ENCODE measurements at regions of chr5 and their contacts with region 1.

Region 1: GRCh38 chr5:177607452-177608192 is 7.7 kb downstream of the B4GALT7 start:
- DNase-seq: peak; percentile 78 to 90
- ATAC-seq: peak; percentile 86 to 95
- H3K4me3 ChIP-seq: no peak overlapping the region
- H3K27ac ChIP-seq: no peak overlapping the region
- H3K4me1 ChIP-seq: peaks cover 12% of the 10 kb centered on the region; the same call in 1 of the 3 replicates
- CTCF ChIP-seq: peak; percentile 75
- EP300 ChIP-seq: no peak
- POLR2A ChIP-seq: no peak
- RAD21 ChIP-seq: peak; percentile 71 to 75

Region 2: DNA sequence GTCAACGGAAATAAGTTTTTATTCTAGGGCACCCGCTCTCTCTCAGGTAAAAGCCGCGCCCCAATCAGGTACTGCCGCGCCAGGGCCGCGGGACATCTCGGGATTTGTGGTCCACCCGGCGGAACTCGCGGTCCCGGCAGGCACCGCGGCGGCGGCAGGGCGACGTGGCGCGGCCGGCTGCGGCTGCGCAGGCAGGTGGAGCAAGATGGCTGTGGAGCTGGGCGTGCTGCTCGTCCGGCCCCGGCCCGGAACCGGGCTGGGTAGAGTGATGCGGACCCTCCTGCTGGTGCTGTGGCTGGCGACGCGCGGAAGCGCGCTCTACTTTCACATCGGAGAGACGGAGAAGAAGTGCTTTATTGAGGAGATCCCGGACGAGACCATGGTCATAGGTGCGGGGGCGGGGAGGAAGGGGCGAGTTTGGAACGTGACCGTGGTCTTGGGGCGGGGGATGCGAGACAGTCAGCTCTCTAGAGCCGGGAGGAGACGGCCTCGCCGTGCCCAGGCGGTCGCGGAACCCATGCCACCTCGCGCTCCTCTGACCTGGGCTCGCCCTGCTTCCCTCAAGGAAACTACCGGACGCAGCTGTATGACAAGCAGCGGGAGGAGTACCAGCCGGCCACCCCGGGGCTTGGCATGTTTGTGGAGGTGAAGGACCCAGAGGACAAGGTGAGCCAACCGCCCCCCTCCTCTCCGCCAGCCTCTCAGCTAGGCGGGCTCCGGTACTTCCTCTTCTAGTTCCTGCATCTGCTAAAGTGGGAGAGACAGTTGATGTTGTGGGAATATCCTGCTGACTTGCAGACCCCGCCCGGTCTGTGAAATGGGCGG is 15.4 kb before region 1 on chr5 and contains the start of gene TMED9:
- CTCF ChIA-PET with region 1: interaction called, 24 read pairs
- POLR2A ChIA-PET with region 1: interaction called, 5 read pairs
- DNase-seq: peak; percentile 80 to 87
- ATAC-seq: peak; percentile 97 to 99
- H3K4me3 ChIP-seq: peak within 1 kb of the TSS; percentile 94
- H3K27ac ChIP-seq: peak within 1 kb of the TSS; percentile 92 to 96
- H3K4me1 ChIP-seq: peaks cover 10% of the 10 kb centered on the region; the same call in 2 of the 3 replicates
- CTCF ChIP-seq: no peak
- EP300 ChIP-seq: no peak
- POLR2A ChIP-seq: peak; percentile 98
- RAD21 ChIP-seq: no peak
- polyA plus RNA-seq, gene TMED9: 168 and 212 TPM in 2 replicates

Region 3: DNA sequence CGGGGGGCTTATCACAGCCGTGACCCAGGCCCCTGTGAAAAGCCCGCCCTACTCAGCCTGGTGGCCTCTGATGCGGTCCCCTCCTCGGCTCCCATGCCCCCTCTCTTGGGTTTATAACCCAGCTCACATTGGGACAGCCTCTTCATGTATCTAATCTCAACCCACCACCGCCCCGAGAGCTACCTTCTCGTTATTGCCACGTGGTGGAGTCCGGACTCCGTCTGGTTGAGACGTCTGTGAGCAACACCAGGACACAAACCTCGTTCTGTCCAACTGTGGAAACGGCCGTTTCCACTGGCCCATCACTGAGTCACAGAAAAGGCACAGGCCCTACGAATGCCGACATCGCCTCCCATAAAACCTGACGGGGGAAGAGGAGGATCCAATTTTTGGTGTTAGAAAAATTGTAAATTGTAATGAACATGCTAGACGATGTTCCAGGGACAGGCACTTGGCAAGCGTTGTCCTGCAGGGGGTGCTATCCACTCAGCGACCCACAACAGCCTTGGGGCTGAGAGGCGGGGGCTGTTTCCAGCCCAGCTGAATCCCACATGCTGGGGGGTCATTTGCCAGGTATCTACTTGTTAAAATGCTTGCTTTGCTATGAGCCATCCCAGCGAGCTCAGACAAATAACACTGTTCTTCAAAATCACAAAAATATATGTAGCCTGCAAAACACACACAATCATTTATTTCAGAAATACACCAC is 468.4 kb after region 1 on chr5:
- CTCF ChIA-PET with region 1: no interaction called
- POLR2A ChIA-PET with region 1: no interaction called
- DNase-seq: peak; percentile 70 to 82
- ATAC-seq: peak; percentile 89 to 92
- H3K4me3 ChIP-seq: no peak overlapping the region
- H3K27ac ChIP-seq: no peak overlapping the region
- H3K4me1 ChIP-seq: no peaks in the 10 kb centered on the region
- CTCF ChIP-seq: peak; percentile 96
- EP300 ChIP-seq: no peak
- POLR2A ChIP-seq: no peak
- RAD21 ChIP-seq: peak; percentile 87 to 89

Measured in A549 (cell line).